Activated CD8-positive, alpha-beta T cell treated with anti-CD3 and anti-CD28 coated beads, Interleukin-2, amount 10 ng/mL, durations not matched to agents 7 days and 5 days (primary cell): ENCODE measurements at regions of chr7 and their contacts with region 1.

Region 1: DNA sequence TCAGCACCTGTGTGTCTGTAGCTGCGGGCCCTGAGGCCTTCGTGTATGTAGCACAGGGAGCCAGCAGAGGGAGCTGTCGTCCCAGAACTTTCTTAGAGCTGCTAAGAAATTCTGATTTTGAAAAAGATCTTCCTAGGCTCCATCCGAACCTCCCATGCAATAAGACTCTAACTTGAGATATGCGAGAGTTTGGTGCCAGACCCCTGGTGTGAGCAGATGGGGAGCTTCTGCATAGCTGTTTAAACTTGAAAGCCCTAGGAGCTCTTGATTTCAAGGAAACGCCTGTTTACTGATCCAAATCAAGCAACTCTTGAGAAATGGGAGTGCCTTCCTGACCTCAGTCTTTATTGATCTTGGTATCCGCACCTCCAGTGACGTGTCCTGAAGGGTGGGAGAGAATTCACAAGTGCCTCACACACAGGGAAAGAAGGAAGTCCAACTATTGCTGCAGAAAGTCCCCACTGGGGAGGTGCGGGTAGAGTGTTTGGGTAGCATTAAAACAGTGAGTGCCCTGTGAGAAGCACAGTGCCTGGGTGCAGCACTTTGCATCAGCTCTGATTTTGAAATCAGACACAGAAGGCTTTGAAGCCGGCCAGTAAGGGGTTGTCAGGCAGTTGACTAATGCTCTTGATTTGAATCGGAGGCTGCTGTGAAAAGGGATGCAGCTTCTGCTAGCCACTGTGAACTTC is 66.4 kb upstream of the STRIP2 start:
- DNase-seq: peak; percentile 82
- ATAC-seq: peak; percentile 91
- H3K4me3 Mint-ChIP-seq: peak overlapping the region; percentile 16
- H3K27ac Mint-ChIP-seq: no peak overlapping the region
- H3K4me1 Mint-ChIP-seq: peaks cover 16% of the 10 kb centered on the region
- H3K27me3 Mint-ChIP-seq: peaks cover 2% of the 10 kb centered on the region

Region 2: GRCh38 chr7:129351320-129351719 is 16.5 kb before region 1 on chr7:
- CTCF ChIA-PET with region 1: interaction called, 31 read pairs
- POLR2A ChIA-PET with region 1: no interaction called
- DNase-seq: no peak
- ATAC-seq: no peak
- H3K4me3 Mint-ChIP-seq: no peak overlapping the region
- H3K27ac Mint-ChIP-seq: no peak overlapping the region
- H3K4me1 Mint-ChIP-seq: no peaks in the 10 kb centered on the region
- H3K27me3 Mint-ChIP-seq: no peaks in the 10 kb centered on the region

Region 3: DNA sequence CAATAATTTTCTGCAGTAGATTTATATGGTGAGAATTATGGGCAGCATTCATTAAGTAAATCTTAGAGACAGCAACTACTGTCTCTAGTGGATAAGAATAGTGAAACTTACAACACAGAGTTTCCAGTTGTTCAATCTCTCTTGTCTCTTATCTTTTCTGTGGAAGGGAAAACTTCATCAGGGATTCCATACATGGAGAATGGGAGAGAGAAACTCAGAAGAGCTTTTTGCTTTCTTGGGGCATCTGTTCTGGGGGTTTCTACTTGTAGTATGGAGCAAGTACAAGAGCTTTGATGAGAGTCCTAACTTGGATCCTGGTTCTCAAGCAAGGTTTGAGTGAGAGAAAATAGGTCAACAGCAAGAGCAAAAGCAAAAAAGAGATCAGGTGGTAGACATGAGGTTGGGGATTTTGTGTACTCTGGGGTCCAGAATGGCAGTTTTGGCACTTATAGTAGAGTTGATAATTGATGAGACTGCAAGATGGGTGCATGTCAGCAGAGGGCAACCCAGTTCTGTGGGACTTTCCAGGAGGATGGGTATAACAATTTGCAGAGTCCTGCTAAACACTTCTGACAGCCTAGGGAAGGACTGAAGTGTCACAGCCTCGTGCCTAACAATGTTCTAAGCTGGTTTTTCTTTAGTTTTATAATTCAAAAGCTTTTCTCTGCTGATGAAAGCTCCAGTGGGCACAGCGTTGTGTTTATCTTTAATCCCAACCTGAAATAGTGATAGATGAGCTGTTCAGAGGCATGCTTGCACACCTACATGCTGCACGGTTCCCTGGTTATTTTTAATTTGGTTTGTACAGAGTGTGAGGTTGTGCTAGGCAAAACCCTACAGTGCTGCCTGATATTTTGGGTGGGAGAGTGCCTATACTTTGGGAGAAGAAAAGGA is 34.4 kb after region 1 on chr7:
- CTCF ChIA-PET with region 1: interaction called, 12 read pairs
- POLR2A ChIA-PET with region 1: no interaction called
- DNase-seq: peak; percentile 26
- ATAC-seq: peak; percentile 47
- H3K4me3 Mint-ChIP-seq: no peak overlapping the region
- H3K27ac Mint-ChIP-seq: no peak overlapping the region
- H3K4me1 Mint-ChIP-seq: no peaks in the 10 kb centered on the region
- H3K27me3 Mint-ChIP-seq: no peaks in the 10 kb centered on the region

Region 4: DNA sequence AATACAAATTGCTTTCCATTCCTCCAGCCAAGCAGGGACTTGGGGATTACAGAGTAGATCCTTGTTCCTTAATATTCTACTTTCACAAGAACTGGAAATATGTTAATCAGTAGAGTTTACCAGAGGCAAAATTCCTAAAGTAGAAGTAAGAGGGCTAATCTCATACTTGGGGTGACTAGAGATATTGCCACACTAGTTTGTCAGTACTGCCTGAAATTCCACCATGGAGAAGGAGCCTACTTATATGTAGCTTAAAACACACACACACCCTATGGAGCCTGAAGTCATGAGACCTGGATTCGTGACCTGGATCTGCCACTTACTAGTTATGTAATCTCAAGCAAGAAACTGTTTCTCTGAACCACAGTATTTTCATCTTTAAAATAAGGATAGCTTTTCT is 100.2 kb after region 1 on chr7:
- CTCF ChIA-PET with region 1: interaction called, 144 read pairs
- POLR2A ChIA-PET with region 1: no interaction called
- DNase-seq: no peak
- ATAC-seq: no peak
- H3K4me3 Mint-ChIP-seq: no peak overlapping the region
- H3K27ac Mint-ChIP-seq: no peak overlapping the region
- H3K4me1 Mint-ChIP-seq: no peaks in the 10 kb centered on the region
- H3K27me3 Mint-ChIP-seq: no peaks in the 10 kb centered on the region

Region 5: GRCh38 chr7:129522088-129522970 is 154.5 kb after region 1 on chr7:
- CTCF ChIA-PET with region 1: no interaction called
- POLR2A ChIA-PET with region 1: no interaction called
- DNase-seq: no peak
- ATAC-seq: no peak
- H3K4me3 Mint-ChIP-seq: no peak overlapping the region
- H3K27ac Mint-ChIP-seq: no peak overlapping the region
- H3K4me1 Mint-ChIP-seq: peaks cover 2% of the 10 kb centered on the region
- H3K27me3 Mint-ChIP-seq: peaks cover 7% of the 10 kb centered on the region

Region 6: GRCh38 chr7:129635300-129636029 is 267.6 kb after region 1 on chr7:
- CTCF ChIA-PET with region 1: interaction called, 16 read pairs
- POLR2A ChIA-PET with region 1: no interaction called
- DNase-seq: peak; percentile 80
- ATAC-seq: peak; percentile 86
- H3K4me3 Mint-ChIP-seq: no peak overlapping the region
- H3K27ac Mint-ChIP-seq: no peak overlapping the region
- H3K4me1 Mint-ChIP-seq: peaks cover 32% of the 10 kb centered on the region
- H3K27me3 Mint-ChIP-seq: no peaks in the 10 kb centered on the region

Region 7: GRCh38 chr7:129825496-129826267 is 457.8 kb after region 1 on chr7:
- CTCF ChIA-PET with region 1: interaction called, 24 read pairs
- POLR2A ChIA-PET with region 1: interaction called, 3 read pairs
- DNase-seq: peak; percentile 92
- ATAC-seq: peak; percentile 85
- H3K4me3 Mint-ChIP-seq: peak overlapping the region; percentile 89
- H3K27ac Mint-ChIP-seq: peak overlapping the region; percentile 89
- H3K4me1 Mint-ChIP-seq: peaks cover 26% of the 10 kb centered on the region
- H3K27me3 Mint-ChIP-seq: no peaks in the 10 kb centered on the region